CD14-positive monocyte (primary cell): ENCODE measurements at regions of chr21 and their contacts with region 1.

Region 1: DNA sequence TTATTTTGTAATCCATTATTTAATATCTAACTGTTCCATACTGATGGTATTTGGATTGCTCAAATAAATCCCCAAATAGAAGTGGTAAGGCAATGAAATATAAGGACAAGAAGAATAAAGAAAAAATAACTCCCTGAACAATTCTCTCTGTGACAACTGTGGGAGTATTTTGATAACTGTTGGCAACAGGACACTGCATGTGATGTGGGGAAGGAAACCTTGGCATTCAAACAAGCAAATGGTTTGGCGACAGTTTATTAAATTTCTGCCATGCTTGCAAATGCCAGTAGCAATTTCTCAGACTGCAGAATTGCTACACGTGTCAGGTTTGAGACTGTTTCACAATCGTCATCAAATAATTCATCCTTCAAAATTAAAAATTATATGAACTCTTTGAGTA is 8.6 kb upstream of the MRPL39 start:
- DNase-seq: no peak
- H3K4me3 ChIP-seq: no peak overlapping the region
- H3K4me3 Mint-ChIP-seq: no peak overlapping the region
- H3K27ac ChIP-seq: no peak overlapping the region
- H3K27ac Mint-ChIP-seq: no peak overlapping the region
- H3K4me1 ChIP-seq: no peaks in the 10 kb centered on the region
- H3K4me1 Mint-ChIP-seq: no peaks in the 10 kb centered on the region
- H3K27me3 ChIP-seq: no peaks in the 10 kb centered on the region
- H3K27me3 Mint-ChIP-seq: no peaks in the 10 kb centered on the region
- CTCF ChIP-seq: no peak

Region 2: GRCh38 chr21:25649146-25649545 is 33.3 kb after region 1 on chr21:
- intact Hi-C with region 1: no loop called
- DNase-seq: peak; percentile 13 to 83 (median 38)
- H3K4me3 ChIP-seq: no peak overlapping the region
- H3K4me3 Mint-ChIP-seq: peak overlapping the region in 1 of 2 donors; percentile 51
- H3K27ac ChIP-seq: peak overlapping the region in 1 of 2 donors; percentile 50
- H3K27ac Mint-ChIP-seq: peak overlapping the region in 5 of 7 donors; percentile 34 to 73 (median 70)
- H3K4me1 ChIP-seq: peaks cover 20 to 22% of the 10 kb centered on the region in 2 donors
- H3K4me1 Mint-ChIP-seq: peaks cover 29% of the 10 kb centered on the region
- H3K27me3 ChIP-seq: no peaks in the 10 kb centered on the region
- H3K27me3 Mint-ChIP-seq: peaks cover 0 to 2% (median 0%) of the 10 kb centered on the region in 3 donors
- CTCF ChIP-seq: no peak

Region 3: DNA sequence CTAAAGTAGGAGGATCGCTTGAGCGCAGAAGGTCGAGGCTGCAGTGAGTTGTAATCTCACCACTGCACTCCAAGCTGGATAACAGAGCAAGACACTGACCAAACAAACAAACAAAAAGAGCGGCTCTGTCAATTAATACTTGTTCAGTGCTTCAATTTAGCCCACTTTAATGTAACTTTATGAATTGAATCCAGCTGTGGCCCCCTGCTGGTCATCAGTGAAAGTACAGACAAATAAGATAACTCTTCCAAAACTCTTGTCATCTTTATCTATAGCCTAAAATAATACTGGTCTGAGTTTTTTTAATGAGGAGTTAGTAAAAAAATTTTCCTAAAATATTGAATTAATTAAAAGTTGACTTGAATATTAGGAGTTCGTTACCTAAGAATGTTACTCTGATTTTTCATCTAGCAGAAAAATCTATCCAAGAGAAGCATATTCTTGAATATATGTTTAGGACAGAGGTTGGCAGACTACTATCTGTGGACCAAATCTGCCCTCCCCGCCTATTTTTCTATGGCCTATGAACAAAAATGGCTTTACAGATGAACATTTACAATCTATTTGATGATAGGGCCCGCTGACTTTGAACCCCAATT is 92.7 kb after region 1 on chr21:
- intact Hi-C with region 1: loop called in 1 of 2 experiments (anchors 5 kb)
- DNase-seq: peak; percentile 13 to 48 (median 41)
- H3K4me3 ChIP-seq: no peak overlapping the region
- H3K4me3 Mint-ChIP-seq: no peak overlapping the region
- H3K27ac ChIP-seq: no peak overlapping the region
- H3K27ac Mint-ChIP-seq: no peak overlapping the region
- H3K4me1 ChIP-seq: no peaks in the 10 kb centered on the region
- H3K4me1 Mint-ChIP-seq: no peaks in the 10 kb centered on the region
- H3K27me3 ChIP-seq: no peaks in the 10 kb centered on the region
- H3K27me3 Mint-ChIP-seq: no peaks in the 10 kb centered on the region
- CTCF ChIP-seq: peak; percentile 94

Region 4: DNA sequence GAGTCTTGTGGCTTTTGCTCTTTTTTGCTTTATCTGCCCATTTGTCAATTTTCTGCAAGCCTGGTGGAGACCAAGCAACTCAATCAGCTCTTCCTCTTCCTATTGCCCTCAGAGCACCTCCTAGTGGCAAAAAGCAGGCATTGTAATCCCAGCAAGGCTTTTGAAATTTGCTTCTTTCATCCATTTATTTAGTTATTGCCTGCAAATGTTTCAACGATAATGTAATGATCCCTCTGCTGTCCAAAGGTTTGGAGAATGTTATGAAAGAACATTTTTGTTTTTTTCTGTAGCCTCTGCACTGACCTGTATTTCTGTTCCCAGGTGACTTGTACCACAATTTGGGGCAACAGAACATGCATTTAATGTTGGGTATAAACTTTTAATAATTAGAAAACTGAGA is 246.7 kb after region 1 on chr21:
- intact Hi-C with region 1: loop called in 1 of 2 experiments (anchors 10 kb)
- DNase-seq: peak; percentile 14 to 37 (median 33)
- H3K4me3 ChIP-seq: no peak overlapping the region
- H3K4me3 Mint-ChIP-seq: no peak overlapping the region
- H3K27ac ChIP-seq: no peak overlapping the region
- H3K27ac Mint-ChIP-seq: no peak overlapping the region
- H3K4me1 ChIP-seq: no peaks in the 10 kb centered on the region
- H3K4me1 Mint-ChIP-seq: no peaks in the 10 kb centered on the region
- H3K27me3 ChIP-seq: no peaks in the 10 kb centered on the region
- H3K27me3 Mint-ChIP-seq: peaks cover 0 to 5% (median 0%) of the 10 kb centered on the region in 3 donors
- CTCF ChIP-seq: peak; percentile 86